PC-3 (cell line): ENCODE measurements at regions of chr1 and their contacts with region 1.

Region 1: GRCh38 chr1:220776720-220777326 is 9.9 kb upstream of the MTARC1 start:
- DNase-seq: peak; percentile 85
- ATAC-seq: peak; percentile 99
- H3K4me3 ChIP-seq: no peak overlapping the region
- H3K27ac ChIP-seq: no peak overlapping the region
- H3K4me1 ChIP-seq: no peaks in the 10 kb centered on the region
- H3K27me3 ChIP-seq: no peaks in the 10 kb centered on the region
- CTCF ChIP-seq: peak; percentile 98

Region 2: DNA sequence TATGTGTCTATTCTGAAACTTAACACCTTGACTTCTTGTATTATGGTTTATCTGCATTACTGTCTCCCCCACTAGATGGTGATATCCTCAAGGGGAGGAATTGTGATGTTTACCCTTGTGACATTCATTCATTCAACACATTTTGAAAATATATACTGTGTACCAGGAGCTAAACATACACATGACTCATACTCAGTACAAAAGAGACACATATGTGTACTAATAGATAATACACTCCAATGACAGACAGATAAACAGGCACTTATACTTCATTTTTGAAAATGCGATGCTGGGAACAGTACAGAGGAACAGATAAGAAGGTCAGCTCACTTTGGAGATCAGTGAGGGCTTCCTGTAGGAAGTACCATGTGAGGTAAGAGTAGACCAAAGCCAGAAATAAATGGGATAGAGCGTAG is 495.7 kb before region 1 on chr1:
- CTCF ChIA-PET with region 1: no interaction called
- POLR2A ChIA-PET with region 1: no interaction called
- intact Hi-C with region 1: loop called (anchors 1 kb)
- DNase-seq: peak; percentile 84
- ATAC-seq: peak; percentile 85
- H3K4me3 ChIP-seq: no peak overlapping the region
- H3K27ac ChIP-seq: no peak overlapping the region
- H3K4me1 ChIP-seq: 0 out of 2 replicates have a peak, but pooled peaks cover 4% of the 10 kb centered on the region
- H3K27me3 ChIP-seq: peaks cover 53% of the 10 kb centered on the region
- CTCF ChIP-seq: peak; percentile 94

Region 3: DNA sequence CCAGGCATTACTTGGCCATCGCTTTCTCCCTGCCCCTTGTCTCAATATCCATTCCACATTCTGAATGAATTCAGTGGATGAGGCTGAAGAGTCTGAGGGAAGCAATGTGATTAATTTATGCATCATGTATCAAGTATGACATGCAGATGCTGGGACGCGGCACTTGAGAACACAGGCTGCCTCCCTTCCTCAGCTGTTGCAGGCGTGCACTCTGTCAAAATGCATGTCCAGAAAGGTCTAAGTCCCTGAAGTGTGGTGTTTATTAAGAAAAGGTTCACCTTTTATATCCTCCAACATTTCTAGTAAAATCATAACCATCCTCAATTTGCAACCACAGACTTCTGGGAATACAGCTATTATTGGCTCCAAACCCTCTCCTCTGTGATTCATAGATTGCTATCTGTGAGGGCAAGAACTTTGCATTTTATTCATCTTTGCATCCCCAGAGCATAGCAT is 481.9 kb before region 1 on chr1:
- CTCF ChIA-PET with region 1: no interaction called
- POLR2A ChIA-PET with region 1: no interaction called
- intact Hi-C with region 1: loop called (anchors 5 kb)
- DNase-seq: peak; percentile 33
- ATAC-seq: no peak
- H3K4me3 ChIP-seq: no peak overlapping the region
- H3K27ac ChIP-seq: no peak overlapping the region
- H3K4me1 ChIP-seq: no peaks in the 10 kb centered on the region
- H3K27me3 ChIP-seq: peaks cover 45% of the 10 kb centered on the region
- CTCF ChIP-seq: no peak

Region 4: DNA sequence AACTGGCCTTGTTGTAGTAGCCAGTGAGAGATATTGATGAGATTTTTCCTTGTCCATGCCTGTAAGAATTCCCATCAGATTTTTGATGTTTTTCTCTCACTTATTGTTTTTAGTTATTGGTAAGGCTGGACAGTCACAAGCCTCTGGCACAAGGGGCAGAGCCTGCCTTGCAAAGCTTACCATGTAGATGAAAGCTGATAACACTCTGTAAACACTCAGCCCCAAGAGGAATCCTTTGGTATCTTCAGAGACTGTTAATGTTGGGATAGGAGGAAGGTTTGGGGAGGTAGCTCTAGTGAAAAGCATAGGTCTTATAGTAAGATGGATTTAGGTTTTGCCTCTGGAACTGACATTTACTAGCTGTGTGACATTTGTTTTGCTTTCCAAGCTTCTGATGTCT is 211.2 kb before region 1 on chr1:
- CTCF ChIA-PET with region 1: no interaction called
- POLR2A ChIA-PET with region 1: no interaction called
- intact Hi-C with region 1: no loop called
- DNase-seq: no peak
- ATAC-seq: peak; percentile 45; the same call in 1 of the 2 replicates
- H3K4me3 ChIP-seq: no peak overlapping the region
- H3K27ac ChIP-seq: no peak overlapping the region
- H3K4me1 ChIP-seq: no peaks in the 10 kb centered on the region
- H3K27me3 ChIP-seq: peaks cover 64% of the 10 kb centered on the region
- CTCF ChIP-seq: no peak

Region 5: DNA sequence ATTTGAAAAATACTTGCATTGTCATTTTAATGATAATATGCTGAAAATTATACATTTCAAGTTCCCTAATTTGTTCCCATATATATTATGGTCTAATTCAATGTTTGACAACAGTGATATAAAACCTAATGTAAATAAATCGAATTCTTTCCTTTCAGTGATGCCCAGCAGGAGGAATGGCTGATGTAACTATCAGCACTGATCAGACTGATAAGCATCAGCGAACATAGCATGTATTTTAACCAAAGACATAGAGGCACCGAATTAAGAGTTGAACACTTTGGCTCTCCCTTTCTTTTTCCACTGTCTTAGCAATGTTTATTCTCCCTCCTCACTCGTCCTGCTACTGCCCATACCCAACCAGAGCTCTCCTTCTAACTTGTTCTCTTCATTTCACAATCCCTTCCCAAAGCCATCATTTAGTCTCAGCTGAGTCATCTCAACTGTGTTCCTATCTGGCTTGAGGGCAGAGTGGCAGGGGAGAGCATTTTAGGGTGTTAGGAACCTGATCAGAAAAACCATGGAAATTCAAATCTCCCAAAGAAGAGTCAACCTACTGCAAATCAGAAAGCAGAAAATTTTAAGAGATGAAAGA is 145.5 kb before region 1 on chr1:
- CTCF ChIA-PET with region 1: no interaction called
- POLR2A ChIA-PET with region 1: no interaction called
- intact Hi-C with region 1: no loop called
- DNase-seq: peak; percentile 29
- ATAC-seq: peak; percentile 35; the same call in 1 of the 2 replicates
- H3K4me3 ChIP-seq: no peak overlapping the region
- H3K27ac ChIP-seq: no peak overlapping the region
- H3K4me1 ChIP-seq: no peaks in the 10 kb centered on the region
- H3K27me3 ChIP-seq: peaks cover 34% of the 10 kb centered on the region
- CTCF ChIP-seq: no peak

Region 6: GRCh38 chr1:220680085-220680687 is 96.6 kb before region 1 on chr1:
- CTCF ChIA-PET with region 1: interaction called, 6 read pairs
- POLR2A ChIA-PET with region 1: no interaction called
- intact Hi-C with region 1: loop called (anchors 1 kb)
- DNase-seq: peak; percentile 73
- ATAC-seq: peak; percentile 82
- H3K4me3 ChIP-seq: no peak overlapping the region
- H3K27ac ChIP-seq: no peak overlapping the region
- H3K4me1 ChIP-seq: peaks cover 13% of the 10 kb centered on the region
- H3K27me3 ChIP-seq: no peaks in the 10 kb centered on the region
- CTCF ChIP-seq: peak; percentile 81

Region 7: GRCh38 chr1:220690140-220691025 is 86.4 kb before region 1 on chr1 and contains the start of gene C1orf115:
- CTCF ChIA-PET with region 1: interaction called, 3 read pairs
- POLR2A ChIA-PET with region 1: no interaction called
- intact Hi-C with region 1: loop called (anchors 1 kb)
- DNase-seq: peak; percentile 95
- ATAC-seq: peak; percentile 81
- H3K4me3 ChIP-seq: peak within 1 kb of the TSS; percentile 82
- H3K27ac ChIP-seq: no peak within 1 kb of the TSS
- H3K4me1 ChIP-seq: peaks cover 7% of the 10 kb centered on the region; the same call in 1 of the 2 replicates
- H3K27me3 ChIP-seq: no peaks in the 10 kb centered on the region
- CTCF ChIP-seq: peak; percentile 96
- total RNA-seq, gene C1orf115: 5.9 and 6.3 TPM in 2 replicates

Region 8: DNA sequence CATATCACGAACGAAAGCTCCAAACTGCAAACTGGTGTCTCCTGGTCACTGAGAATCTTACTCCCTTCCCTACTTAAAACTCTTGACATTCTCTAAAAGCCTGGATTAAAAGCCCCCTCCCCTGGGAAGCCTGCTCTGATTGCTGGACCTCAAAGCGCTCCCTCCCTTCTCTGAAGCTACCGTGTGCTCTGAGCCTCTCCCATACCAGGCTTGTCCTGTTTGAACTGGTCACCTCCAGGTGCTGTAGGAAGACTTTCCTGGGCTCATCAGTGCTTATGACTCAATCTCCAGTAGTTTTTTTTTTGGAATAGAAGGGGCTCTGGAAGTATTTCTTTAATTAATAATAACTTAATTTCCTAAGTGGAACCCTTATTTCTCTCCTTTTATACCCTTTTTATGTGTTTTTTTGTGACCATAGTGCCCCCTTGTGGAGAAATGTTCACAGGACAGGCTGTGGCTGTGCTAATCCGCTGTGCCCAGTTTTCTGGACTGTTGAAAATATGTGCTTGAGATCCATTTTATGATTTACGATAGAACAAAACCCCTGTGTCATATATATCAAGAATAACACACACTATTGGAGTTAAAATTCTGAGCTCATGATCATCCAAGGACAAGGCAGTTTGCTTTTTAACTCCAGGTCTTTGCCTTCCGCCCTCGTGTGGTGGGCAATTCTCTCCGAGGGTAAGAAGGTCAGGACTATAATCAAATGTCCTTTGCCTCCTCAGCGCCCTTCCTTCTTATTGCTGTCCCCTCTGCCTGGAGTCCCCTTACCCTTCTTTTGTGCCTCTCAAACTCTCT is 26.8 kb after region 1 on chr1:
- CTCF ChIA-PET with region 1: no interaction called
- POLR2A ChIA-PET with region 1: no interaction called
- intact Hi-C with region 1: loop called (anchors 1 kb)
- DNase-seq: peak; percentile 64
- ATAC-seq: peak; percentile 77
- H3K4me3 ChIP-seq: no peak overlapping the region
- H3K27ac ChIP-seq: no peak overlapping the region
- H3K4me1 ChIP-seq: no peaks in the 10 kb centered on the region
- H3K27me3 ChIP-seq: no peaks in the 10 kb centered on the region
- CTCF ChIP-seq: peak; percentile 98